ENCODE measurements at regions of chr6 and their contacts with region 1.

Region 1: DNA sequence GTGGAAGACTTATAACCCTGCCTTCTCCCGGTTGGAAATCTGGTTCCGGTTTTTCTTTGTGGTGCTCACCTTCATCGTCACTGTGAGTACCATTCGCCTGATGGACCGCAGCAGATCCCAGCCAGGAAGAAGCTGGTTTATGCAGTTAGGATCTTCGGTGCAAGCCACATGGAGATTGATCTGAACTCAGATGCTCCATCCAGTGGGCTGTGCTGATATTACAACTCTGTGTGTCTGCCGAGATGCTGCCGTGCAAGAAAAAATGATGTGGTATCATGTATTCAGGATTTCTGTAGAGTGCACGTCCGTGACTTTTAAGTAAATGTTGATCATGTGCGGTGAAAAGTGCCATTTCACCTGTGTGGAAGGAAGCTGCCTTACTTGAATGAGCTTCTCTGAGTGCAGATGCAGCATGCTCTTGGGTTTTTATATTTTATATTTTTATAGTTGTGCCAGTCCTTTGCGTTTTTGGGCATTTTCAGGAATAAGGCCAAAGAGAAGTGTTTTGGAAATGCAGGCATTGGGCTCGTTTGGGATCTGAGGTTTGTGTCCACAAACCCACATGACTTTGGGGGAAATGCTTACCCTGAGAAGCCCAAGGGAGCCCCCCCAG is 39.2 kb downstream of the DYNLT1 start:
- DNase-seq: peak; percentile 56
- H3K27ac ChIP-seq: peak overlapping the region; percentile 17; the same call in 1 of the 2 replicates
- CTCF ChIP-seq: peak; percentile 75

Region 2: DNA sequence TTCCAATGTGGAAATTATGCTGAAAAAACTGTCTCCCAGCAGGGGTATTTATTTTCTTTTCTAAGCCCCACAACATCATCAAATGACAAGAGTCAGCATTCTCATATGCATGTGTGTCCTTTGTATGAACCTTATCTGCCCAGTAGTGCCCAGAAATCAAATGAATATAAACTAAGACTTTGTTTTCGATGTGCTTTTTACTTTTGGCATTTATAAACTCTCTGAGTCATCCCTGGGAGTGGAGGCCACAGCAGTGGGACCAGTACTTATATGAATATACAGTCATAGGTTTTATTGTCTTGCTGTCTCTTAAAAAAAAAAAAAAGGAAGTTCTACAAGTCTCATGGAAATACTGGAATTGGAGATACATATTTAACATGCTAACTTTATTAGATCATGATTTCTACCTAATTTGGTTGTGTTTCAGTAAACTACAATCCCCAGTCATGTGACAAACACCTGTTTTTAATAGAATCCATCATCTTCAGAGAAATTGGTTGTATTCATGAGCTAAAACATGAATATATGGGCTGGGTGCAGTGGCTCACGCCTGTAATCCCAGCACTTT is 144.7 kb before region 1 on chr6:
- CTCF ChIA-PET with region 1: no interaction called
- POLR2A ChIA-PET with region 1: no interaction called
- DNase-seq: peak; percentile 30
- H3K27ac ChIP-seq: no peak overlapping the region
- CTCF ChIP-seq: no peak

Region 3: DNA sequence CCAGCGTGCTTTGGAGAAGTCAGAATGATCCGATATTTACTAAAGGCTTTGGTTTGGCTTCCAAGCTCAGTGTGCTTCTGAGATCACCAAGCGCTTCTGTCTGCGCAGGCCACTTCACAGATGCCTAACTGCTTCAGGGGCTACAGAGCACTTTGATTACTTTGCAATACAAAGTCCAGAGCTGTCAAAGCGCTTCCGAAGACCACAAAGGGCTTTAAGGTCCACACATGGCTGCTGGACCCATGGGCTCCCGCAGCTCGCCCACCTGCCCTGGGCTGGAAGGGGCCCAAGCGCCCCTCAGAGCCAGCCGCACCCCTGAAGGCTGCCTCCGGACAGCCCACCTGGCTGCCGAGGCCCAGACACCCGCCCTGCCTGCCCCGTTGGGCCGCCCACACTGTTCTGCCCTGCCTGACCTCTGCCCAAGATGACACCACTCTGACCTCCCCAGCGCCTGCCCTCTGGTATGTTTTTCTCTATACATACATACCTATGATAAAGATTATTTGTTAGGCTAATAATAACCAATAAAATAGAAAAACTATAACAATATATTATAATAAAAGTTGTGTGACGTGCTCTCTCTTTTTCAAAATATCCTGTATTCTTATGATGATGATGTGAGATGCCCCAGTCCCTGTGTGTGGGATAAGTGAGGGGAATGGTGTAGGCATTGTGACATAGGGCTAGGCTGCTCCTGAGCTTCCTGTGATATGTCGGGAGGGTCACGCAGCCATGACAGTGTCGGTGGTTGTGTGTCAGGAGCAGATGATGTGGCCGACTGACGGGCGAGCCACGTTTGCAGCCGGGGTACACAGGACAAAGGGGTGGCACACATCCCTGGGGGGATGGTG is 16.5 kb after region 1 on chr6:
- CTCF ChIA-PET with region 1: interaction called, 3 read pairs
- POLR2A ChIA-PET with region 1: interaction called, 12 read pairs
- DNase-seq: no peak
- H3K27ac ChIP-seq: no peak overlapping the region
- CTCF ChIP-seq: no peak

Region 4: GRCh38 chr6:158923805-158924498 is 318.6 kb after region 1 on chr6:
- CTCF ChIA-PET with region 1: no interaction called
- POLR2A ChIA-PET with region 1: no interaction called
- DNase-seq: no peak
- H3K27ac ChIP-seq: no peak overlapping the region
- CTCF ChIP-seq: no peak